Activated B cell treated with CpG ODN at 0.5 μM for 24 hours (primary cell): ENCODE measurements at regions of chr10 and their contacts with region 1.

Region 1: GRCh38 chr10:93267521-93267920 is 193.8 kb downstream of the CYP26A1 start:
- DNase-seq: no peak
- ATAC-seq: peak; percentile 88
- H3K4me3 Mint-ChIP-seq: no peak overlapping the region
- H3K27ac Mint-ChIP-seq: peak overlapping the region; percentile 46
- H3K4me1 Mint-ChIP-seq: peaks cover 21% of the 10 kb centered on the region
- H3K27me3 Mint-ChIP-seq: no peaks in the 10 kb centered on the region
- CTCF ChIP-seq: no peak

Region 2: DNA sequence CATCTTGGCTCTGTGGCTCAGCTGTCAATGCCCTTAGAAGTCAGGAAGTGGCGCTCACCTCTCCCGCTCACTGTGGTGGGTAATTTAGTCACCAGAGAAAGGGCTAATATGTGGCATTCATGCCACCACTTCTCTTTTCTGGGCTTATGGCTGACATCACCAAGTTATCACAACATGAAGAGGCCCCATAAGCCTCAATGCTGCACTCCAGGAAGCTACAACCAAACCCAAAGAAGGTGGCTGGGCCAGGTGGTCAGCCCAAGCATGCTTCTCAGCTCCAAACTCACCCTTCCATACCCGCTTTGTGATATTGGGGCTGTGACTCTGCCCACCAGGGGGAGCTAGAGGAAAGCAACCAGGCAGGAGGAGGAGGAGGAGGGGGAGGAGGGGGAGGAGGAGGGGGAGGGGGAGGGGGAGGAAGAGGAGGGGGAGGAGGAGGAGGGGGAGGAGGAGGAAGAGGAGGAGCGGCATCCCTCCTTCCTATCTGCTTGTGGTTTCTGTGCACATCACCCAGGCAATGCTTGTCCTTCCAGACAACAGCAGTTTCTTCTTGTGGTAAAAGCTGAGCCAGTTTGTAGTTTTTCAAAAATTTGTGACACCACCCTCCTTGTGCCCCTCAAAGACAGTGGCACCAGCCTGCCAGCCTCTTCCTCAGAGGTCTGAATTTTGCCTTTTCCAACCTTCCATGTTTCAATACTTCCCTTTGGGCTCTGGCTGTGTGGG is 151.7 kb before region 1 on chr10:
- CTCF ChIA-PET with region 1: no interaction called
- POLR2A ChIA-PET with region 1: no interaction called
- intact Hi-C with region 1: loop called (anchors 1 kb)
- DNase-seq: peak; percentile 36
- ATAC-seq: peak; percentile 69
- H3K4me3 Mint-ChIP-seq: no peak overlapping the region
- H3K27ac Mint-ChIP-seq: no peak overlapping the region
- H3K4me1 Mint-ChIP-seq: peaks cover 17% of the 10 kb centered on the region
- H3K27me3 Mint-ChIP-seq: peaks cover 4% of the 10 kb centered on the region
- CTCF ChIP-seq: no peak

Region 3: GRCh38 chr10:93293999-93294398 is 26.5 kb after region 1 on chr10:
- CTCF ChIA-PET with region 1: no interaction called
- POLR2A ChIA-PET with region 1: no interaction called
- intact Hi-C with region 1: no loop called
- DNase-seq: no peak
- ATAC-seq: no peak
- H3K4me3 Mint-ChIP-seq: no peak overlapping the region
- H3K27ac Mint-ChIP-seq: no peak overlapping the region
- H3K4me1 Mint-ChIP-seq: no peaks in the 10 kb centered on the region
- H3K27me3 Mint-ChIP-seq: no peaks in the 10 kb centered on the region
- CTCF ChIP-seq: no peak